ENCODE measurements at regions of chr1 and their contacts with region 1.

Region 1: DNA sequence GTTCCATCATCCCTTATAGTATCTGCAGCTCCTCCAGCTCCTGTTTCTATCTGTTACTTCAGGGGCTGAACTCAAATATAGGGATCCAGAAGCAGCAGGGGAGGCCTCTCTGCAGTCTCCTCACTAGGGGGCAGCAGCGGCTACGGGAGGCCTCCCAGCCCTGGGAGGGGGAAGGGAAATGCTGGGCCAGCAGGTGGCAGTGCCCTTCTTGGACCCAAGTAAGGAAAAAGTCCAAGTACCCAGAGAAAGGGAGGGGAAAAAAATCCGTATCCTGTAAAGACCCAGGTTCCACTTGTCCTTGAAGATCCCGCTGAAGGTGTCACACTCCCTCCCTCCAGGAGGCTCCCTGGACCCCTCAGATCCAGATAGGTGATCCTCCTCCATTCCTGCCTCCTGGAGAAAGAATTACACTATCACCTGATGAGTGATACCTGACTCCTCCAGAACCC is 14.1 kb upstream of the NUAK2 start:
- DNase-seq: peak; percentile 83
- H3K4me3 Mint-ChIP-seq: no peak overlapping the region
- H3K27ac Mint-ChIP-seq: no peak overlapping the region
- H3K4me1 Mint-ChIP-seq: peaks cover 6% of the 10 kb centered on the region
- H3K27me3 Mint-ChIP-seq: peaks cover 33% of the 10 kb centered on the region

Region 2: DNA sequence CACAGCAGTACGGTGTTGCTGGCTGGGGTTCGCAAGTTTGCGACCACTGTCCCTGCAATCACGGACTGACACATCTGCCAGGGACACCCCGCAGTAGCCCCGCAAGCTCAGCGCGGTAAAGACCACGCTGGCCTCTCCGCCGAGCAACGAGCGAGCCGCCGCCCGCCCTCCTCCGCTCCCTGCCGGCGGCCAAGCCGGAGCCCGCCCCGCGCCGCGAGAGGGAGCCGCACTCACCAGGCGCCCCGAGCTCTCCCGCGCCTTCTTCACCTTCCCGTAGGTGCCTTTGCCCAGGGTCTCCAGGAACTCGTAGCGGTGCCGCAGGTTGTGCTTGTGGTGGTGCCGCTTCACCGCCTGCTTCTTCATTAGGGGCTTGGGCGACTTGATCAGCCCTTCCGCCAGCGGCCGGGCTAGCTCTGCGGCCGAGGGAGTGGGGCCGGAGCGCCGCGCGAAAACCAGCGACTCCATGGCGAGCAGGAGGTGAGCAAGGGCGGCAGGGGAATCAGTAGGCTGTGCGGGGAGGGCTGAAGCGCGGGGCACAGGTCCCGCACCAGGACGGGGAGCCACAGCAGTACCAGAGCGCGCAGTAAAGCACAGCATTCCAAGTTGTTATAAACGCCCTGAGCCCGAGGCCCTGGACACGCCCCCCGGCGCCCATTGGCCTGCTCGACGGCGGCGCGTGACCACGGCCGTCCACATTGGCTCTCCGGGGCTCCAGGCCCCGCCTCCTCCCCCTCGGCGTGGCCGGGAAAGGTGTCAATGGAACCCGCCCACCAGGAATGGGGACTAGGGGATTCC is 14.3 kb before region 1 on chr1 and contains the start of gene NUAK2:
- CTCF ChIA-PET with region 1: interaction called, 41 read pairs
- POLR2A ChIA-PET with region 1: interaction called, 5 read pairs
- DNase-seq: peak; percentile 80
- H3K4me3 Mint-ChIP-seq: peak within 1 kb of the TSS; percentile 86
- H3K27ac Mint-ChIP-seq: peak within 1 kb of the TSS; percentile 71
- H3K4me1 Mint-ChIP-seq: peaks cover 54% of the 10 kb centered on the region
- H3K27me3 Mint-ChIP-seq: peaks cover 22% of the 10 kb centered on the region
- total RNA-seq, gene NUAK2: 12.4 to 13.0 TPM

Region 3: DNA sequence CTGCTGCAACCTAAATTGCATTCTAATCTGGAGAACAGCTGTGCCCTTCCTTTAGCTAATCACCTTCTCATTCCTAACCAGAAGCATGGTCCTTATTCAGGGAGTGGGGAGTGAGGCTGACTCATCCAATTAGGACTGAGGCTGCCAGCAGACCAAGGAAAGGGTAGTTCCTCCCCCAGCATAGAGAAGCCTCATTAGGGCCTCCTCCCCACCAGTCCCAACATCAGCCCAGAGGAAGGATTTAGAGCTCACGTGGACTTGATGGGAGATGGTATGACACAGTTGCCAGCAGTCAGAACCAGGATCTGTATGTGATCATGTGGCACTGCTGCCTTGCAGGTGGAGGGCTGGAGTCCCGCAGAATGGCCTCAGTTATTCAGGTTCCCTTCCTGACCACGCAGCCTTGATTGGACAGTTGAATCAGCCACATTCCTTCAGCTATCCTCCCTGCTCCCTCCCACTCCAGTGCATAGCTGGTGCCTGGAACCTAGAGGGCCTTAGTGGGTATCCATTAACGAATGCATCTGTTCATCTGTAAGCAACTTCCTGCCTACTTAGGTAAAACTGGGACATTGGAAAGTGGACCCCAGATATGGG is 13.3 kb after region 1 on chr1:
- CTCF ChIA-PET with region 1: interaction called, 10 read pairs
- POLR2A ChIA-PET with region 1: no interaction called
- DNase-seq: no peak
- H3K4me3 Mint-ChIP-seq: no peak overlapping the region
- H3K27ac Mint-ChIP-seq: no peak overlapping the region
- H3K4me1 Mint-ChIP-seq: peaks cover 5% of the 10 kb centered on the region
- H3K27me3 Mint-ChIP-seq: peaks cover 46% of the 10 kb centered on the region

Measured in activated CD4-positive, alpha-beta memory T cell treated with anti-CD3 and anti-CD28 coated beads, Interleukin-2, amount 10 ng/mL, durations not matched to agents 7 days and 5 days (primary cell).